Heart right ventricle (tissue), 16 donors: ENCODE measurements at regions of chr1 and their contacts with region 1.

Region 1: GRCh38 chr1:32329931-32330466 is 6.0 kb downstream of the MARCKSL1 start:
- DNase-seq: no peak
- ATAC-seq: no peak
- H3K4me3 ChIP-seq: no peak overlapping the region
- H3K27ac ChIP-seq: no peak overlapping the region
- H3K4me1 ChIP-seq: peaks cover 0 to 16% (median 9%) of the 10 kb centered on the region in 9 donors
- H3K27me3 ChIP-seq: peaks cover 0 to 7% (median 0%) of the 10 kb centered on the region in 7 donors
- CTCF ChIP-seq: no peak

Region 2: DNA sequence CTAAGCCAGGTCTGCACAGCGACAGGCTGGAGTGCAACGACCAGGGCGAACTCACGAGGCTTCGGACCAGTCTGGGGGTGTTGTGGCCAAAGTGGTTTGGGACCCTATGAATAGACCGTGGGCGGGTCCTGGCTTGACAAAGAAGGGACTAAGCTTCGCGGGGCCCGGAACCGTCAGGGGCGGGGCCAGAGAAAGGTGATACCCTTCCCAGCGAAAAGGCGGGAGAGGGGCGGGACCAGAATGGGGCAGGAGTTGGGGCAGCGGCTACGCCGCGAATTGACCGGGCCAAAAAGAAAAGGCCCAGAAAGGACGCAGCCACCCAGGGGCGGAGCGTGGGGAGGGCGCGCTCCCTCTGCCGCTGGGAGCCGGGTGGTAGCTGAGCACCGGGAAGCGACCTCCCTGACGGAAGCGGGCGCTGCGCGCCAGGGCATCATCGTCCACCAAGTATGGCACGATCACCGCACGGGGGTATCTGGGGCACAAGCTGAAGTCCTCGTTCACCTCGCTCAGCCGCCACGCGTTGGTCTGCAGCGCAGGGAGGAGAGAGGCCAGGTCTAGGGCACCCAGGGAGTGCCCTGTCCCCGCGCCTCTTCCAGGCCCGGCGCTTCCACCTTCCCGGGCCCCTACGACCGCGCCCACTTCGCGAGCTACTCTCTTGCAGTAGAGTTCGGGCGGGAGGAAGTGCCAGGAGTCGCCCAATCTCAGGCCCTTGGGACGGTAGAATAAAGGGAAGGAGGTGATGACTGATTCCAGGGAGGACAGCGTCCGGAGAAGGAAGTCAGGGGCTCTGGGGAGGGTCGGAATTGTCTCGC is 89.7 kb before region 1 on chr1:
- intact Hi-C with region 1: loop called in 1 of 10 experiments (anchors 5 kb)
- DNase-seq: peak; percentile 68 to 73
- ATAC-seq: peak; percentile 65 to 83 (median 78)
- H3K4me3 ChIP-seq: peak overlapping the region; percentile 48 to 86 (median 72)
- H3K27ac ChIP-seq: peak overlapping the region; percentile 41 to 96 (median 88)
- H3K4me1 ChIP-seq: peaks cover 0 to 44% (median 28%) of the 10 kb centered on the region in 9 donors
- H3K27me3 ChIP-seq: peaks cover 0 to 10% (median 0%) of the 10 kb centered on the region in 7 donors
- CTCF ChIP-seq: peak in 5 of 9 donors; percentile 29 to 56 (median 50)